Prostate gland (tissue), 2 donors: ENCODE measurements at regions of chr1 and their contacts with region 1.

Region 1: DNA sequence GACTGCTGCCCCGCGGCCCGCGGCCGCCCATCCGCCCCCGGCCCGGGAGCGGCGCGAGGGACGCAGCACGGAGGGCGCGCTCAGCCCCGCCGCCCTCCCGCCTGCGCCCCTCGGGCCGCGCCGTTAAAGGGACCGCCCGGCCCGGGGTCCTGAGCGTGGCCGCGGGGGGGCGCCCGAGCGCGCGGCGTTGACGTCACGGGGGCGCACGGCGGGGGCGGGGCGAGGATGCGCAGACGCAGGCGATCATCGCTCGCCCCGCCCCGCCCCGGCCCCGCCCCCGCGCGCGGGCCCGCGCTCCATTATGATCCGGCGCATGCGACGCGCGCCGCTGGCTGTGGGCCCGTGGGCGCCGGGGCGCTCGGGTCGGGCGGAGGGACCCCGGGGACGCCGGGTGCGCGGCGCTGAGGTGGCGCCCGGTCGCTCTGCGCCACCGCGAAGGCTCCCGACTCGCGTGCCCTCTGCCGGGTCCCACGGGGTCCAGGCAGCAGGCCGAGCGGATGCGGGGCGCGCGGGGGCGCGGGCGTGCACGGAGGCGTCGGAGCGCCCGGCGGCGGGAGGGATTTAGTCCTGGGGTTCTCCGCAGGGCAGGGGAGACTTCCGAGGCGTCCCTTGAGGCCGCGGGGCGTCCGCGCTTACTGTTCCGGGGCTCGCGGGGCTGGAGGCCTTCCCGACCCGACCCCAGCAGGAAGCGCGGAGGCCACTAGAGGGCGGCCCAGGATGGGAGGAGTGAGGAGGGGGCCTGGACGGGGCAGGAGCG is at the start of gene DVL1:
- DNase-seq: peak; percentile 33
- H3K4me3 ChIP-seq: peak within 1 kb of the TSS; percentile 74 to 82
- H3K27ac ChIP-seq: peak within 1 kb of the TSS; percentile 85 to 87
- H3K4me1 ChIP-seq: peaks cover 14% of the 10 kb centered on the region
- H3K27me3 ChIP-seq: no peaks in the 10 kb centered on the region
- CTCF ChIP-seq: peak; percentile 33 to 78 (median 54)
- POLR2A ChIP-seq: peak; percentile 17
- total RNA-seq, gene DVL1: 70.5 to 165 TPM

Region 2: DNA sequence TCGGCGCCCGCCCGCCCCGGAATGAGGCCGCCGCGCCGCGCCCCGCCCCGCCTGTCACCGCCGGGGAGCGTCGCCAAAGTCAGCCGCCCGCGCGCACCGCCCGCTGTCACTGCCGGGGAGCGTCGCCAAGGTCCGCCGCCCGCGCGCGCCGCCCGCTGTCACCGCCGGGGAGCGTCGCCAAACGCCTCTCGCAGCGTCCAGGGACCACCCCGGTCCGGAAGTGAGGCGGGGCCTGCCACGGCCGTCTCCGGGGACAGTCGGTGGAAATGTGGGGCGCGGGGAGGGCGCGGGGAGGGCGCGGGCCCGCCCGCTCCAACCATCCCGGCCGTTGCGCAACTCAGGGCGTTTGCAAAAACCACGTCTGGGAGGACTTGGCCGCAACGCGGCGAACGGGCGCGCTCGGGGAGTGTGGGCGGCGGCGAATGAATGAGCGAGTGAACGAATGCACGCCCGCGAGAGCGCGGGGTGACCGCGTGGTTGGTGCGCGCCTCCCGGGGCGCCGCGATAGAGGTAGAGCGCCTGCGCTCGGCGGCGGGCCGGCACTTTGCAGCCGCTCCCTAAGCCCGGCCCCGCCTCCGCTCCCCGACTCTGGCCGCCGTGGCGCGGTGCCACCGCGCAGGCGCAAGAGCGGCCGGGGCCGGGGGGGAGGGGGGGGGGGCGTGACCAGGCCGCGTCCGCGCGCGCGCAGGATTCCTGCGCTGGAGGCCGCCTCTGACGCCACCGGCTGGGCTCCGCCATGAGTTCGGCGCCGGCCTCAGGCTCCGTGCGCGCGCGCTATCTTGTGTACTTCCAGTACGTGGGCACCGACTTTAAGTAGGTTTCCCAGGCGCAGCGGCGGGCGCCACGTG is 41.3 kb before region 1 on chr1 and contains the starts of genes ACAP3 and PUSL1:
- intact Hi-C with region 1: loop called (anchors 5 kb)
- DNase-seq: peak; percentile 75
- H3K4me3 ChIP-seq: peak within 1 kb of the TSS; percentile 79 to 97
- H3K27ac ChIP-seq: peak within 1 kb of the TSS; percentile 89 to 93
- H3K4me1 ChIP-seq: peaks cover 40% of the 10 kb centered on the region
- H3K27me3 ChIP-seq: no peaks in the 10 kb centered on the region
- CTCF ChIP-seq: peak in 2 of 4 experiments; percentile 42 to 44
- POLR2A ChIP-seq: peak; percentile 34
- total RNA-seq, gene ACAP3: 43.2 to 58.6 TPM
- total RNA-seq, gene PUSL1: 30.6 to 36.9 TPM